PC-3 (cell line): ENCODE measurements at regions of chr18 and their contacts with region 1.

Region 1: DNA sequence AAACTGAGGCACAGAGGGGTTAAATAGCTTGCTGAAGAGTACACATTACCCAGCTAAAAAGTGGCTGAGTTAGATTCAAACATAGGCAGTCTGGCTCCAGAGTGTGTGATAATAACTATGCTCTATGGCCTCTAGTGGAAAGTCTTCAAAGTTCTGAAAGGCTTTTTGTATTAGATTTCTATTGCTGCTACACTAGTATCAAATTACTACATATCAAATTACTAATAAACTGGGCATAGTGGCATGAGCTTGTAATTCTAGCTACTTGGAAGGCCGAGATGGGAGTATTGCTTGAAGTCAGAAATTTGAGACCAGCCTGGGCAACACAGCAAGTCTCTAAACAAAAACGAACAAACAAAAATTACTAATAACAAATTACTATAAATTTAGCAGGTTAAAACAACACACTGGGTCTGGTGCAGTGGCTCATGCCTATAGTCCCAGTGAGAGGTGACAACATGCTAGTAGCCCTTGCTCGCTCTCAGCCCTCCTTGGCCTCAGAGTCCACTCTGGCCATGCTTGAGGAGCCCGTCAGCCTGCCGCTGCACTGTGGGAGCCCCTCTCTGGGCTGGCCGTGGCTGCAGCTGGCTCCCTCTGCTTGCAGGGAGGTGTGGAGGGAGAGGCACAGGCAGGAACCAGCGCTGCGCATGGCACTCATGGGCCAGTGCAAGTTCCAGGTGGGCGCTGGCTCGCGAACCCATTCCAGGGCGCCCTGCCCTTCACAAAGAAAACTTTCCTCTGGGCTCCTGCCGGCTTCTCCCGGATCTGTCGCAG is 38.2 kb upstream of the TWSG1 start:
- DNase-seq: peak; percentile 82
- ATAC-seq: peak; percentile 98
- H3K4me3 ChIP-seq: no peak overlapping the region
- H3K27ac ChIP-seq: peak overlapping the region; percentile 31; the same call in 1 of the 2 replicates
- H3K4me1 ChIP-seq: peaks cover 13% of the 10 kb centered on the region
- H3K27me3 ChIP-seq: no peaks in the 10 kb centered on the region
- CTCF ChIP-seq: no peak

Region 2: DNA sequence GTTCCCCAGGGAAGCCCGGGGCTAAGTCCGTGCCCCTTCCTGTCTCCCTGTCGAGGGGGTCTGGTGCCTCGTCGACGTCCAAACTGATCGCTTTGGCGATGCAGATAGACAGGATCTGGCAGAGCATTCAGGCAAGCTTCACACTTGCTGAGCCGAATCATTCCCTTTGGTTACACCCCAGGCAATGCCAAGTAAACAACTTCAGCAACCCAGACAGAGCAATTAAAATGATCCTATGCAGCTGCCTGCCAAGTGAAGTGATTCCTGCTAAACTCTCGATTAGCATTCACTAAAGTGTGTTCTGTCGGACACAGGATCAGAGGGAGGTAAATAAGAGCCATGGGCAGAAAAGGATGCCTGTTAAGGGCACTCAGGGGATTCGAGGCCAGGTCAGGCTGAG is 795.4 kb before region 1 on chr18:
- CTCF ChIA-PET with region 1: no interaction called
- POLR2A ChIA-PET with region 1: no interaction called
- intact Hi-C with region 1: no loop called
- DNase-seq: no peak
- ATAC-seq: no peak
- H3K4me3 ChIP-seq: no peak overlapping the region
- H3K27ac ChIP-seq: no peak overlapping the region
- H3K4me1 ChIP-seq: peaks cover 11% of the 10 kb centered on the region
- H3K27me3 ChIP-seq: no peaks in the 10 kb centered on the region
- CTCF ChIP-seq: no peak

Region 3: DNA sequence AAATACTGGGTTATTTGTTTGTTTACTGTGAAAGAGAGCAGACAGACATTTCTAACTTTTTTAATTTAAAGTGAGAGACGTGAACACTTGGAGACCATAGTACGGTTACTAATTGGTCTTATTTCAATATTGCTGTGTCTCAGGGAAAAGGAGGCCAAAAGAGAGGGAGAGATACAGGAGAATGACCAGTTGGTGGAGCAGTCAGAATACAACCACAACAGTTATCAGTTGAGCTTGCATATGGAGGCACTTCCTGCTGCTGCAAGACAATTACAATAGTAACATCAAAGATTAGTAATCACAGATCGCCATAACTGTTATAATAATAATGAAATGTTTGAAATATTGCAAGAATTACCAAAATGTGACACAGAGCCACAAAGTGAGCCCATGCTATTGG is 96.3 kb after region 1 on chr18:
- CTCF ChIA-PET with region 1: interaction called, 19 read pairs
- POLR2A ChIA-PET with region 1: no interaction called
- intact Hi-C with region 1: no loop called
- DNase-seq: no peak
- ATAC-seq: no peak
- H3K4me3 ChIP-seq: no peak overlapping the region
- H3K27ac ChIP-seq: no peak overlapping the region
- H3K4me1 ChIP-seq: peaks cover 10% of the 10 kb centered on the region; the same call in 1 of the 2 replicates
- H3K27me3 ChIP-seq: no peaks in the 10 kb centered on the region
- CTCF ChIP-seq: peak; percentile 25; the same call in 1 of the 2 replicates

Region 4: DNA sequence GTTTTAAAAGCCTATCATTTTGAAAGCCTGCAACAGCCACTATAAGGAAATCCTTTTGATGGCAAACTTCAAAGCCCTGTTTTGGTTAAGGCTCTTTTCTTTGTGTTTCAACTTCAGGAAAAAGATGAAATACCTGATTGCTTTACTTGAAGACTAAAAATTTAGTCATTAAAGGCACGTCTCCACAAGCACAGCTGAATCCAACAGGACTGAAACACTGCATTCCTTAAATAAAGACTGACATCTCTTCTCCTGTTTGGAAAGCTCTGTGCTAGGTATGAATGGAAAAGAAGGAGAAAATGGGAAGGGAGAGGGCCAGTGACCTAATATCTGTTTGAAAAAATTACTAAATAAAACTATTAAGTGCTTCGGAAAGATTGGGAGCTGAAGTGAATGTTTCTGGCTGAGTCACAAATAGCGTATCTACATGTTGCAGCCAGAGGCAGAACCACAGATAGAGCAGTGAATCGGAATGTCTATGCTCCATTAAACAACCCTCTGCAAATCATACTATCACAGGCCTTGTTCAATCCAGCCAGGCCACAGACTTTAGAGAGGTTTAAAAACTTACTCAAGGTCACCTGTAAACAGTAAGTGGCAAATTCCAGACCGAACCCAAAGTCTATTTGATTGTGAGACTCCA is 157.8 kb after region 1 on chr18:
- CTCF ChIA-PET with region 1: no interaction called
- POLR2A ChIA-PET with region 1: no interaction called
- intact Hi-C with region 1: no loop called
- DNase-seq: no peak
- ATAC-seq: no peak
- H3K4me3 ChIP-seq: no peak overlapping the region
- H3K27ac ChIP-seq: no peak overlapping the region
- H3K4me1 ChIP-seq: no peaks in the 10 kb centered on the region
- H3K27me3 ChIP-seq: no peaks in the 10 kb centered on the region
- CTCF ChIP-seq: no peak